HEK293T (cell line): ENCODE measurements at regions of chr2 and their contacts with region 1.

Region 1: DNA sequence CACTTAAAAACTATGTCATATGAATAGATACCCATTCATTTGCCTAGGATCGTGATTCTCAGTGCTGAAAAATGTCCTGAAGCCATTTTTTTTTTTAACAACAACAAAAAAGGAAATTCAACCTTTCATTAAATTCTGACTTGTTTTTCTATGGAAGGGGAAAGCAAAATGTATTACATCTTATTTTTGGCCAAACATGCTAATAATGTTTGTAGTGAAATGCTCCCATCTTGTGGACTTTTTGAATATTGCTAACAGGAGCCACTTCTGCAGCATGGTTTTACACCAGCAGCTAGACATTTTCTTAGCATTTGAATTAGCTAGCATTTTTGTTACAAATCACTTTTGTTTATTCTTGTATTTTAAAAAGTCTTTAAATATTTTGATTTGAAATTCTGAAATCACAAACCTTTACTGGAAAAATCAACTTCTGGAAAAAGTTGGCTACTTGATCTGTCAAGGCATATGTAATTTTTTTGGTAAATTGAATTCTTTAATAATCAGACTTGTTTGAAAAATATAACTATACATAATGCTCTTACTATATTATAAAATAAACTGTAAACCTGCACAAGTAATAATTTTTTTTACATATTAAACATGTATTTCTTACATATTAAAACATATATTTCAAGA is 75.8 kb downstream of the KIDINS220 start:
- DNase-seq: peak; percentile 36

Region 2: DNA sequence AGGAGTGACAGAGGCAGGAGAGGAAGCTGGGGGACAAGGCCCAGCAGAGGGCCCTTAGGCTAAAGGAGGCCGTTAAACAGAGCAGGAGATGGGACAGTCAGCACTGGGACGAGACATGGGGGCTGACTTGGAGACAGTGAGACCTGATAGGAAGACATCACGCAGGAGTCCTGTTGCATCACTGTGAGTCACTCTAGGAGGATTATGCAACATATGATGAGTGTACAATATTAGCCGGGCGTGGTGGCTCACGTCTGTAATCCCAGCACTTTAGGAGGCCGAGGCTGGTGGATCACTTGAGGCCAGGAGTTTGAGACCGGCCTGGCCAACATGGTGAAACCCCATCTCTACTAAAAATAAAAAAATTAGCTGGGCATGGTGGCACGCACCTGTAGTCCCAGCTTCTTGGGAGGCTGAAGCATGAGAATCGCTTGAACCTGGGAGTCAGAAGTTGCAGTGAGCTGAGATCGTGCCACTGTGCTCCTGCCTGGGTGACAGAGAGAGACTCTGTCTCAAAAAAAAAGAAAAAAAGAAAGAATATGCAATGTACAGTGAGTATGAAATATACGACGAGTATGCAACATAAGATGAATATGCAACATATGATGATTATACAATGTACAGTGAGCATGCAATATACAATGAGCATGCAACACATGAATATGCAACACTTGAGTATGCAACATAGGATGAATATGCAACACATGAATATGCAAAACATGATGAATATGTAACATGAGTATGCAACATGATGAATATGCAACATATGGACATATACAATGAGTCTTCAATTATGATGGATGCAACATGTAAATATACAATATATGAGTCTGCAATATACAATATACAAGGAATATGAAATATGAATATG is 163.1 kb before region 1 on chr2:
- CTCF ChIA-PET with region 1: no interaction called
- POLR2A ChIA-PET with region 1: no interaction called
- DNase-seq: no peak

Region 3: GRCh38 chr2:8693155-8693821 is 68.4 kb before region 1 on chr2:
- CTCF ChIA-PET with region 1: interaction called, 11 read pairs
- POLR2A ChIA-PET with region 1: no interaction called
- DNase-seq: peak; percentile 72

Region 4: DNA sequence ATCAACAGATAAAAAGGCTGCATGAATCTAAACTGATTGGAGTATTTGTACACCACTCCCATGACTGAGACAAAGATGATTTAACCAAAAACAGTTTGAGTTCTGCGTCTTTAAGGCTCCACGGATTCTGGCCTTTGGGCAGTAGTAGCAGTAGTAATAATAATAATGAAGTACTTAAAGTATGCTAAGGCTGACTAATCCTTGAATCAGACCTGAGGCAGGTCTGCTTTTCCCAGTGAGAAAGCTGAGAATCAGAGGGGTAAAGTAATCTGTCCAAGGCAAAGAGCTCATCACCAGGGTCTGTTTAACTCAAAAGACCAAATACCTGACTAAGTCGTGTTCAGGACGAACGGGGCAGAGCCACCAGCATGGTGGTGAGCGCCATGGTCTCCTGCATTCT is 18.4 kb before region 1 on chr2:
- CTCF ChIA-PET with region 1: no interaction called
- POLR2A ChIA-PET with region 1: no interaction called
- DNase-seq: no peak